Activated CD4-positive, alpha-beta memory T cell treated with anti-CD3 and anti-CD28 coated beads, Interleukin-2, amount 10 ng/mL, durations not matched to agents 7 days and 5 days (primary cell): ENCODE measurements at regions of chr17 and their contacts with region 1.

Region 1: GRCh38 chr17:65100316-65101140 is 36.6 kb upstream of the RGS9 start:
- DNase-seq: peak; percentile 87
- H3K4me3 Mint-ChIP-seq: peak overlapping the region; percentile 78
- H3K27ac Mint-ChIP-seq: peak overlapping the region; percentile 95
- H3K4me1 Mint-ChIP-seq: peaks cover 39% of the 10 kb centered on the region
- H3K27me3 Mint-ChIP-seq: peaks cover 2% of the 10 kb centered on the region

Region 2: DNA sequence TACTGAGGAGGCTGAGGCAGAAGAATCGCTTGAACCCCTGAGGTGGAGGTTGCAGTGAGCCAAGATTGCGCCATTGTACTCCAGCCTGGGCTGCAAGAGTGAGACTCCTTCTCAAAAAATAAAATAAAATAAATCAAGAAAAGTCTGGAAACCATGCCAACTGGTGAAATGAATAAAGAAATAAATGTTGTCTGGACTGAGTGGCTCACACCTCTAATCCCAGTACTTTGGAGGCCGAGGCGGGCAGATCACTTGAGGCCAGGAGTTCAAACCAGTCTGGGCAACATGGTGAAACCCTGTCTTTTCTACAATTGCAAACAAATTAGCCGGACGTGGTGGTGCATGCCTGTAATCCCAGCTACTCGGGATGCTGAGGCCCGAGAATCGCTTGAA is 180.5 kb before region 1 on chr17:
- CTCF ChIA-PET with region 1: interaction called, 18 read pairs
- POLR2A ChIA-PET with region 1: interaction called, 4 read pairs
- DNase-seq: no peak
- H3K4me3 Mint-ChIP-seq: peak overlapping the region; percentile 83
- H3K27ac Mint-ChIP-seq: peak overlapping the region; percentile 82
- H3K4me1 Mint-ChIP-seq: peaks cover 15% of the 10 kb centered on the region
- H3K27me3 Mint-ChIP-seq: no peaks in the 10 kb centered on the region

Region 3: GRCh38 chr17:64984851-64985521 is 115.5 kb before region 1 on chr17:
- CTCF ChIA-PET with region 1: interaction called, 21 read pairs
- POLR2A ChIA-PET with region 1: interaction called, 12 read pairs
- DNase-seq: peak; percentile 71
- H3K4me3 Mint-ChIP-seq: peak overlapping the region; percentile 70
- H3K27ac Mint-ChIP-seq: peak overlapping the region; percentile 98
- H3K4me1 Mint-ChIP-seq: peaks cover 57% of the 10 kb centered on the region
- H3K27me3 Mint-ChIP-seq: no peaks in the 10 kb centered on the region

Region 4: DNA sequence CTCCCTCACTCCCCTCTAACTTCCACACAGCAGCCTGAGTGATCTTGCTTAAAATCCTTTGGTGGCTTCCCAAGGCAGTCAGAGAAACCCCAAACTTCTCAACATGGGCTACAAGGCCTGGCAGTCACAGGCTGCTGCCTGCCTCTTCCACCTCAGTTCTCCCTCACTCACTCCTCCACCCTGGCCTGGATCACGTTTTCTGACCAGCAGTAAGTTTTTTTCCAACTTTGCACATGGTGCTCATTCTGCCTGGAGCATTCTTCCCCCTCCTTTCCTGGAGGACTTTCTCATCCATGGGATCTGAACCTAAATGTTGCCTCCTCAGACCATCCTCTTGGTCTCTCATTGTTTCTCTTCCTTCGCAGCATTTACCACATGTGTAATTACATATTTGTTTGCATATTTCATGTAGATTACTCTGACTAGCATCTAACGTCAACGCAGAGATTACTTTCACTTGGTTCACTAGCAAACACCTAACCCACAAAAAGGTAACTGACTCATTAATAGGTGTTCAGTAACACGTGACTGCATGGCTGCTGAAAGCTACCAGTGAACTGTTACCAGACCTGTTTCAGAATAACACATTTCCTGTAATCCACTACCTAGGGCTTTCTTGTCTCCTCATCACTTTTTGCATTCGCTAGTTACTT is 61.1 kb before region 1 on chr17:
- CTCF ChIA-PET with region 1: interaction called, 10 read pairs
- POLR2A ChIA-PET with region 1: interaction called, 3 read pairs
- DNase-seq: peak; percentile 66
- H3K4me3 Mint-ChIP-seq: peak overlapping the region; percentile 58
- H3K27ac Mint-ChIP-seq: peak overlapping the region; percentile 82
- H3K4me1 Mint-ChIP-seq: peaks cover 84% of the 10 kb centered on the region
- H3K27me3 Mint-ChIP-seq: no peaks in the 10 kb centered on the region

Region 5: DNA sequence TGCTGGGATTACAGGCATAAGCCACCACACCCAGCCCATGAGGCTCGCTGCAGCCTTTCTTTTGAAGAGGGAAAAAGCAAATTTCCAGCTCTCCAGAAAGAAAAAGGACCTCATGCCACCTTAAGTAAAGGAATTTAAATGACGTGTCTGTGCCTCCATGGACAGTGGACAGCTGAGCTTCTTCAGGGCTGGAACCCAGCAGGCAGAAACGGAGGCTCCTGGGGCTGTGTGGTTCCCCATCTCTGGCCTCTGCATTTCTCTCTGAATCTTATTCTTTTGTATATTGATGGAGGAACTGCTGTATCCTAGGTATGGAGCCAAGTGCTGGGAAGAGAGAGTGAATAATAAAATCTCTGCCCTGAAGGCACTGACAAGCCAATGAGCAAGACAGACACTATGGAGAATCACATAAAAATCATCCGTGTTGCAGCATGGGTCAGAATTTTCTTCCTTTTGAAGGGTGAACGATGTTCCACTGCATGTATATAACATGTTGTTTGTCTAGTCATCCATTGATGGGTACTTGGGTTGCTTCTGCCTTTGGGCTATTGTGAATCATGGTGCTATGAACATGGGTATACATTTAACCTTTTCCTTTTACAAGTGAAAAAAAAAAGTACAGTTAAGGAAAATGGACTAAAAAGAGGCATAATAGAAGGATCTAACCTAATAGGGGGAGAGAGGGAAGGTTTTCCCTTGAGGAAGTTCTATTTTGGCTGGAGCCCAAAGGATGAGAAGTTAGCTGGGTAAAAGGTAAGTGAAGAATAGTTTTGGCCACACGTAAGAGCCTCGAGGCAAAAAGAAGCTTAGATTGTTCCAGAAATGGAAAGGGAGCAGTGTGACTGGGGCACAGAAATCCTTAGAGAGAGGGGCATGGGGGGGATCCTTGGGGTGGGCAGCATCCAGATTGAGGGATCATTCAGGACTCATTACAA is 11.8 kb before region 1 on chr17:
- CTCF ChIA-PET with region 1: interaction called, 12 read pairs
- POLR2A ChIA-PET with region 1: interaction called, 9 read pairs
- DNase-seq: no peak
- H3K4me3 Mint-ChIP-seq: no peak overlapping the region
- H3K27ac Mint-ChIP-seq: no peak overlapping the region
- H3K4me1 Mint-ChIP-seq: peaks cover 6% of the 10 kb centered on the region
- H3K27me3 Mint-ChIP-seq: peaks cover 4% of the 10 kb centered on the region

Region 6: GRCh38 chr17:65137021-65137991 is 36.8 kb after region 1 on chr17 and contains the start of gene RGS9:
- CTCF ChIA-PET with region 1: interaction called, 69 read pairs
- POLR2A ChIA-PET with region 1: interaction called, 20 read pairs
- DNase-seq: peak; percentile 90
- H3K4me3 Mint-ChIP-seq: peak within 1 kb of the TSS; percentile 84
- H3K27ac Mint-ChIP-seq: peak within 1 kb of the TSS; percentile 41
- H3K4me1 Mint-ChIP-seq: peaks cover 51% of the 10 kb centered on the region
- H3K27me3 Mint-ChIP-seq: no peaks in the 10 kb centered on the region
- total RNA-seq, gene RGS9: 30.4 to 31.2 TPM

Region 7: GRCh38 chr17:65181237-65182061 is 80.9 kb after region 1 on chr17:
- CTCF ChIA-PET with region 1: interaction called, 27 read pairs
- POLR2A ChIA-PET with region 1: interaction called, 19 read pairs
- DNase-seq: peak; percentile 69
- H3K4me3 Mint-ChIP-seq: peak overlapping the region; percentile 29
- H3K27ac Mint-ChIP-seq: peak overlapping the region; percentile 98
- H3K4me1 Mint-ChIP-seq: peaks cover 88% of the 10 kb centered on the region
- H3K27me3 Mint-ChIP-seq: no peaks in the 10 kb centered on the region

Region 8: DNA sequence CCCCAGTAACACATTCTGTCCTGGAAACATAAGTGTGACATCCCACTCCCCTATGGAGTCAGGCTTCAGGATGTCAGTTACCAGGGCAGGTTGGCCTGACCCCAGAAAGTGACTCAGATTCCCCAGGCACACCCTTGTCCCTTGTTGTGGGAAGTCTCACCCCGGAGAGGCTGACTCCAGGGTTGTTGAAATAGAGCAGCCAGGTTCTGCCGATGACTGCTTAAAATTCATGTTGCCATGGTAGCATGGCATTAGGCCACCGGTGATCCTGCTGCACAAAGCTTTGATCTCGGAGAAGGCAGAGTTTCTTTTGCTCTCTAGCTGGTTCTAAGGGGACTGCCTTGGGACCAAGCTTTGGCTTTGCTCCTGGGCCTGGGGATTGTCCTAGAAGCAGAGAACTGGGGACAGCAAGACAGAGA is 143.3 kb after region 1 on chr17:
- CTCF ChIA-PET with region 1: no interaction called
- POLR2A ChIA-PET with region 1: no interaction called
- DNase-seq: no peak
- H3K4me3 Mint-ChIP-seq: no peak overlapping the region
- H3K27ac Mint-ChIP-seq: no peak overlapping the region
- H3K4me1 Mint-ChIP-seq: peaks cover 5% of the 10 kb centered on the region
- H3K27me3 Mint-ChIP-seq: peaks cover 30% of the 10 kb centered on the region